A549 (cell line): ENCODE measurements at regions of chr5 and their contacts with region 1.

Region 1: GRCh38 chr5:140157032-140157803 is 17.8 kb upstream of the CYSTM1 start:
- DNase-seq: peak; percentile 80 to 95
- ATAC-seq: peak; percentile 94 to 97
- H3K4me3 ChIP-seq: peak overlapping the region; percentile 36
- H3K27ac ChIP-seq: peak overlapping the region; percentile 60 to 87
- H3K4me1 ChIP-seq: peaks cover 4% of the 10 kb centered on the region; the same call in 1 of the 3 replicates
- CTCF ChIP-seq: peak; percentile 96
- EP300 ChIP-seq: no peak
- POLR2A ChIP-seq: no peak
- RAD21 ChIP-seq: peak; percentile 96

Region 2: GRCh38 chr5:140131967-140132409 is 25.2 kb before region 1 on chr5:
- CTCF ChIA-PET with region 1: interaction called, 10 read pairs
- POLR2A ChIA-PET with region 1: no interaction called
- DNase-seq: peak in 1 of 2 experiments; percentile 15
- ATAC-seq: peak in 1 of 2 experiments; percentile 58; a peak in 3 of 6 replicates
- H3K4me3 ChIP-seq: no peak overlapping the region
- H3K27ac ChIP-seq: no peak overlapping the region
- H3K4me1 ChIP-seq: 0 out of 3 replicates have a peak, but pooled peaks cover 11% of the 10 kb centered on the region
- CTCF ChIP-seq: no peak
- EP300 ChIP-seq: no peak
- POLR2A ChIP-seq: no peak
- RAD21 ChIP-seq: no peak